ENCODE measurements at regions of chr15 and their contacts with region 1.

Region 1: GRCh38 chr15:77983708-77984445 is 93.6 kb downstream of the TBC1D2B start:
- DNase-seq: no peak
- ATAC-seq: no peak
- H3K4me3 ChIP-seq: no peak overlapping the region
- H3K27ac ChIP-seq: no peak overlapping the region; a peak in 1 of 6 replicates
- H3K4me1 ChIP-seq: no peaks in the 10 kb centered on the region
- CTCF ChIP-seq: no peak
- EP300 ChIP-seq: no peak
- POLR2A ChIP-seq: no peak
- RAD21 ChIP-seq: no peak

Region 2: DNA sequence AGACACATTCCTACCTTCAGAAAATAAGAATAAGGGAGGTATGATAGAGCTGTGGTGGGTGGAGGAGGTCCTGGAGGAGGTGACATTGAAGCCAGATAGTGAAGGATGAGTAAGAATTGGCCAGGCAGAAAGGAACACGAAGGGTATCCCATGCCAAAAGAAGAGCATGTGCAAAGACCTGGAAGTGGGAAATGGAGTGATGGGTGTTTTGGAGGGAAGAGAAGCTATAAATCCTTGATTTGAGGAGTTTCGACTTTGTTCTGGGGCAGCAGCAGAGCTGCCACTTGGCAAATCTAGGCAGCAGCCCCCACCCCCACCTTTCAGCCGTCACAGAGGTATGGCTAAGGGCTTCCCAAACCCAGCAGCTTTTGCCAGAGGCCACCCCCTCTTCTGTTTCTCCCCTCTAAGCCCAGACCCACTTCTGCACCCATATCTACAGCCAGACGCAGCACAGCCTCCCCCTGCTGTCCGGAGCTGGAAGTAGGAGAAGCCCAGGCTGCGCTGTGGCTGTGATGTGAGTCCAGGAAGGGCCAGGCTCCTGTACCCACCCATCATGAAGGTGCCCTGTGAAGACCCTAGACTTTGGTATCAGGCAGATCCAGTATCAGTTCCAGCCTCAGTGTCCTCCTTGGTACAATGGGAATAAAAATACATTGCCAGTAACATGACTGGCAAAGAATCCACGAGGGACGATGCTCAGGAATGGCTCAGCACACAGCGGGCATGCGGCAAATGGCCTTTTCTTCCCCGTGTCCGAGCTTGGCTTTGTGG is 162.5 kb before region 1 on chr15:
- CTCF ChIA-PET with region 1: no interaction called
- POLR2A ChIA-PET with region 1: no interaction called
- DNase-seq: peak; percentile 77 to 93
- ATAC-seq: peak; percentile 76 to 92
- H3K4me3 ChIP-seq: no peak overlapping the region
- H3K27ac ChIP-seq: no peak overlapping the region
- H3K4me1 ChIP-seq: peaks cover 8% of the 10 kb centered on the region; the same call in 1 of the 3 replicates
- CTCF ChIP-seq: peak; percentile 81
- EP300 ChIP-seq: no peak
- POLR2A ChIP-seq: no peak
- RAD21 ChIP-seq: peak; percentile 90 to 95

Region 3: GRCh38 chr15:77966540-77967290 is 17.2 kb before region 1 on chr15:
- CTCF ChIA-PET with region 1: interaction called, 44 read pairs
- POLR2A ChIA-PET with region 1: no interaction called
- DNase-seq: peak; percentile 65 to 92
- ATAC-seq: peak; percentile 92 to 99
- H3K4me3 ChIP-seq: no peak overlapping the region
- H3K27ac ChIP-seq: no peak overlapping the region
- H3K4me1 ChIP-seq: no peaks in the 10 kb centered on the region
- CTCF ChIP-seq: peak; percentile 94
- EP300 ChIP-seq: no peak
- POLR2A ChIP-seq: no peak
- RAD21 ChIP-seq: peak; percentile 92 to 94